CD14-positive monocyte (primary cell): ENCODE measurements at regions of chr1 and their contacts with region 1.

Region 1: GRCh38 chr1:37682334-37682987 is 9.9 kb upstream of the CDCA8 start:
- DNase-seq: peak; percentile 70 to 79 (median 77)
- H3K4me3 ChIP-seq: no peak overlapping the region
- H3K4me3 Mint-ChIP-seq: no peak overlapping the region
- H3K27ac ChIP-seq: peak overlapping the region in 1 of 2 donors; percentile 57
- H3K27ac Mint-ChIP-seq: peak overlapping the region in 6 of 7 donors; percentile 30 to 81 (median 55)
- H3K4me1 ChIP-seq: peaks cover 2 to 5% of the 10 kb centered on the region in 2 donors
- H3K4me1 Mint-ChIP-seq: peaks cover 12% of the 10 kb centered on the region
- H3K27me3 ChIP-seq: no peaks in the 10 kb centered on the region
- H3K27me3 Mint-ChIP-seq: no peaks in the 10 kb centered on the region
- CTCF ChIP-seq: peak; percentile 91

Region 2: DNA sequence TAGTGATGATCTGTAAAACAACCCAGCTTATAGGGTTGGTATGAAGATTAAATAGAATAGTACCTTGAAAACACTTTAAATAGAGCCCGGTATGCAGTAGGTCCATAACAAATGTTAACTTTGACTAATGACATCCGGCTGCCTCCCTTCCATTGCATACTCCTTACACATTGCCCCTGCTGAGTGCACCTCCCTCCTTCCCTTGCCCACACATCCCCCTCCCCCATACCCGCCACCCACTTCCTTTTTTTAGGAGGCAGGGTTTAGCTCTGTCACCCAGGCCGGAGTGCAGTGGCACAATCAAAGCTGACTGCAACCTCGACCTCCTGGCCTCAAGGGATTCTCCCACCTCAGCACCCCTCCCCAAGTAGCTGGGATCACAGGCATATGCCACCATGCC is 232.5 kb before region 1 on chr1:
- intact Hi-C with region 1: loop called (anchors 5 to 10 kb)
- DNase-seq: peak; percentile 69 to 83 (median 81)
- H3K4me3 ChIP-seq: no peak overlapping the region
- H3K4me3 Mint-ChIP-seq: peak overlapping the region in 1 of 2 donors; percentile 53
- H3K27ac ChIP-seq: no peak overlapping the region
- H3K27ac Mint-ChIP-seq: peak overlapping the region in 6 of 7 donors; percentile 50 to 91 (median 80)
- H3K4me1 ChIP-seq: peaks cover 16 to 28% of the 10 kb centered on the region in 2 donors
- H3K4me1 Mint-ChIP-seq: peaks cover 18% of the 10 kb centered on the region
- H3K27me3 ChIP-seq: peaks cover 0 to 4% of the 10 kb centered on the region in 2 donors
- H3K27me3 Mint-ChIP-seq: peaks cover 3 to 5% (median 4%) of the 10 kb centered on the region in 3 donors
- CTCF ChIP-seq: no peak

Region 3: GRCh38 chr1:37458528-37458927 is 223.9 kb before region 1 on chr1:
- intact Hi-C with region 1: loop called (anchors 5 to 10 kb)
- DNase-seq: no peak
- H3K4me3 ChIP-seq: no peak overlapping the region
- H3K4me3 Mint-ChIP-seq: no peak overlapping the region
- H3K27ac ChIP-seq: no peak overlapping the region
- H3K27ac Mint-ChIP-seq: peak overlapping the region in 1 of 7 donors; percentile 30
- H3K4me1 ChIP-seq: peaks cover 10 to 13% of the 10 kb centered on the region in 2 donors
- H3K4me1 Mint-ChIP-seq: peaks cover 13% of the 10 kb centered on the region
- H3K27me3 ChIP-seq: no peaks in the 10 kb centered on the region
- H3K27me3 Mint-ChIP-seq: peaks cover 0 to 3% (median 0%) of the 10 kb centered on the region in 3 donors
- CTCF ChIP-seq: no peak

Region 4: GRCh38 chr1:37514350-37515184 is 167.9 kb before region 1 on chr1 and contains the start of gene MEAF6:
- intact Hi-C with region 1: loop called in 1 of 2 experiments (anchors 2 kb)
- DNase-seq: peak; percentile 79 to 89 (median 87)
- H3K4me3 ChIP-seq: peak within 1 kb of the TSS; percentile 57 to 90 (median 83)
- H3K4me3 Mint-ChIP-seq: peak within 1 kb of the TSS; percentile 96 to 98
- H3K27ac ChIP-seq: peak within 1 kb of the TSS; percentile 95 to 96
- H3K27ac Mint-ChIP-seq: peak within 1 kb of the TSS; percentile 94 to 99 (median 98)
- H3K4me1 ChIP-seq: peaks cover 17 to 21% of the 10 kb centered on the region in 2 donors
- H3K4me1 Mint-ChIP-seq: peaks cover 23% of the 10 kb centered on the region
- H3K27me3 ChIP-seq: no peaks in the 10 kb centered on the region
- H3K27me3 Mint-ChIP-seq: peaks cover 1 to 4% (median 2%) of the 10 kb centered on the region in 3 donors
- CTCF ChIP-seq: peak; percentile 95
- polyA plus RNA-seq, gene MEAF6: 56.7 to 99.8 (median 79.2) TPM

Region 5: GRCh38 chr1:37667023-37667761 is 15.3 kb before region 1 on chr1:
- intact Hi-C with region 1: no loop called
- DNase-seq: no peak
- H3K4me3 ChIP-seq: no peak overlapping the region
- H3K4me3 Mint-ChIP-seq: no peak overlapping the region
- H3K27ac ChIP-seq: no peak overlapping the region
- H3K27ac Mint-ChIP-seq: no peak overlapping the region
- H3K4me1 ChIP-seq: no peaks in the 10 kb centered on the region
- H3K4me1 Mint-ChIP-seq: no peaks in the 10 kb centered on the region
- H3K27me3 ChIP-seq: no peaks in the 10 kb centered on the region
- H3K27me3 Mint-ChIP-seq: peaks cover 4 to 6% (median 6%) of the 10 kb centered on the region in 3 donors
- CTCF ChIP-seq: no peak